Naive thymus-derived CD8-positive, alpha-beta T cell (primary cell): ENCODE measurements at regions of chr12 and their contacts with region 1.

Region 1: DNA sequence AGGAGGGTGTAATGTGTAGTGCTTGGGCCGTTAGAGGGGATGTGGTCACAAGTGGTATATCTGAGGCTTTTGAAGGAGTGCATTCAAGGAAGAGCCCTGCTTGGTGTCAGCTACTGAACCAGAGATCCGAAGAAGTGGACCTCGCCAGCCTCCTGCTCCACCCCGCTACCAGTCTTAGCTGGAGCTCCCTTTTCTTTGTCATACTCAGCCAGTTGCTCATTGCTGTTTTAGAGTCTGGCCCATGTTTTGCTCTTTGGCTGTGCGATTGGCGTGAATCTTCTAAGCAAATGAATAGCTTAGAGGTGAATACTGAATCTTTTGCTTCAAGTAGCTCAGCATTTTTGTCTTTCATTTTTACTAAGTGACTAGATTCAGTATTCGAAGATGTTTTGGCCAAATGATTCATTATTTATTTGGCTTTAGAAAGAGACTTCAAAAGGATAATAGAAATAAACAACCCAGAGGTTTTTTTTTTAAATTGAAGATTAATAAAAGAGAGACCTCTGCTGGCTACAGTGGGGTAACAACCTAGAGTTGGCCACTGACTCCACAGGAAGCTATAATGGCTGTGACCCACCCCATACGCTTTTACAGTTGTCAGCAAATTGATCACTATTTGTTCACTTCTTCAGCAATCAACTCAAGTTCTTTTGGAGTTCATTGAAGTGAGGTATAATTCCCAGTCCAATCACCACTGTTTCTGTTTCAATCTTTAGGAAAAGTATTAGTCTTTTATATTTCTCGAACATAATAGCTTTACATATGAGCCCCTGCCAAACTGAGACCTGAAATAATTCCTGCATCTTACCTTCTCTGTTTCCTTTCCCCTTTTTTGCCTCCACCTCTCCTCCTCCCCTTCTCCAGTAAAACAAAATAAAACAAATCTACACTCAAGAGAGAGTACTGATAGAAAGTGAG is 19.9 kb downstream of the CDKN1B start:
- DNase-seq: peak in 8 of 10 donors; percentile 8 to 76 (median 54)
- ATAC-seq: peak; percentile 85 to 88
- H3K4me3 Mint-ChIP-seq: peak overlapping the region; percentile 65 to 82 (median 75)
- H3K27ac Mint-ChIP-seq: peak overlapping the region; percentile 88 to 96 (median 90)
- H3K4me1 Mint-ChIP-seq: peaks cover 9 to 46% (median 30%) of the 10 kb centered on the region in 4 donors
- H3K27me3 Mint-ChIP-seq: no peaks in the 10 kb centered on the region

Region 2: GRCh38 chr12:12356886-12357718 is 379.9 kb before region 1 on chr12 and contains the start of gene BORCS5:
- POLR2A ChIA-PET with region 1: interaction called, 20 read pairs
- DNase-seq: peak; percentile 91 to 99 (median 98)
- ATAC-seq: peak; percentile 89 to 93
- H3K4me3 Mint-ChIP-seq: peak within 1 kb of the TSS; percentile 90 to 98 (median 96)
- H3K27ac Mint-ChIP-seq: peak within 1 kb of the TSS; percentile 95 to 100 (median 99)
- H3K4me1 Mint-ChIP-seq: peaks cover 24 to 52% (median 45%) of the 10 kb centered on the region in 4 donors
- H3K27me3 Mint-ChIP-seq: no peaks in the 10 kb centered on the region
- polyA plus RNA-seq, gene BORCS5: 14.2 to 18.4 (median 15.7) TPM

Region 3: GRCh38 chr12:12645485-12645884 is 91.5 kb before region 1 on chr12:
- POLR2A ChIA-PET with region 1: interaction called, 11 read pairs
- DNase-seq: peak in 8 of 10 donors; percentile 23 to 74 (median 58)
- ATAC-seq: peak; percentile 88 to 97
- H3K4me3 Mint-ChIP-seq: no peak overlapping the region
- H3K27ac Mint-ChIP-seq: peak overlapping the region in 6 of 10 donors; percentile 4 to 62 (median 42)
- H3K4me1 Mint-ChIP-seq: peaks cover 2 to 8% (median 6%) of the 10 kb centered on the region in 4 donors
- H3K27me3 Mint-ChIP-seq: no peaks in the 10 kb centered on the region

Region 4: DNA sequence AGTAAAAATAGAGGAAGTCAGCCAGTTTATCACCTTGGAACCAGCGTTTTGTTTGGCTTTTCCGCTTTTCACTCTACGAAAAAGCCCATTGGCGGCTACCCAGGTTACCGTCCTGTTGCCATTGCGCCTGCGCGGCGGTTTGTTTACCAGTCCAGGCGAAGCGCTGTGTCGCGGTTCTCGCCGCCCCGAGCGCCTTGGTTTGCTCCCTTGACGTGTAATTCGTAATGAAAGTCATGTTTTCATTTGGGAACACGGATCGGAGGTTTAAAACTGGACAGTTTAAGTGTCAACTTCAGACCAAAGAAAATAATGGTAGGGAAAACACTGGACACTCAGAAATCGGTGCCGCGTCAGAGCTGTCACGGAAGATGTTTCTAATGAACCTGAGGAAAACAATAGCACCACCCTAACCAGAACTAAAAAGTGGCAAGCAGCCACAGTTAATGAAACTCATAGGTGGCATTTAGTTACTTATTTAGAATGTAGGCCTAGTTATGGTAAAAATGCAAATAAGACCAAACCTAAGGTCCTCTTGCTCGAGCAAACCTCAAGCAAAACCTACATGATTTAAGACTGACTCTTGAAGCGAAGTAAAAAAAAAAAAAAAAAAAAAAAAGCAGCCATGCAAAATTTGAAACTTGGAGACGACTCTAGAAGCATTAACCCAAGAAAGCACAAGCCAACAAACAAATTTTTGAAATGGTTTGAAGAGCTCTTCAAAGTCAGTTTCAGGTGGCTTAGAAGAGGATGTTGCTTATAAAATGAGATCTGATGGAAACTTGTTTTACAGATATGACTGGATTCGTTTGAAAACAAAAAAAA is 40.2 kb before region 1 on chr12:
- POLR2A ChIA-PET with region 1: interaction called, 29 read pairs
- DNase-seq: peak; percentile 82 to 96 (median 93)
- ATAC-seq: peak; percentile 88 to 90
- H3K4me3 Mint-ChIP-seq: peak overlapping the region; percentile 86 to 97 (median 94)
- H3K27ac Mint-ChIP-seq: peak overlapping the region; percentile 98 to 100 (median 100)
- H3K4me1 Mint-ChIP-seq: peaks cover 12 to 35% (median 30%) of the 10 kb centered on the region in 4 donors
- H3K27me3 Mint-ChIP-seq: no peaks in the 10 kb centered on the region

Region 5: GRCh38 chr12:12786716-12787601 is 49.9 kb after region 1 on chr12:
- POLR2A ChIA-PET with region 1: interaction called, 19 read pairs
- DNase-seq: peak; percentile 53 to 83 (median 73)
- ATAC-seq: peak; percentile 85 to 90
- H3K4me3 Mint-ChIP-seq: peak overlapping the region; percentile 80 to 91 (median 85)
- H3K27ac Mint-ChIP-seq: peak overlapping the region; percentile 79 to 96 (median 92)
- H3K4me1 Mint-ChIP-seq: peaks cover 4 to 26% (median 20%) of the 10 kb centered on the region in 4 donors
- H3K27me3 Mint-ChIP-seq: no peaks in the 10 kb centered on the region